Psoas muscle (tissue), 8 donors: ENCODE measurements at regions of chr15 and their contacts with region 1.

Region 1: DNA sequence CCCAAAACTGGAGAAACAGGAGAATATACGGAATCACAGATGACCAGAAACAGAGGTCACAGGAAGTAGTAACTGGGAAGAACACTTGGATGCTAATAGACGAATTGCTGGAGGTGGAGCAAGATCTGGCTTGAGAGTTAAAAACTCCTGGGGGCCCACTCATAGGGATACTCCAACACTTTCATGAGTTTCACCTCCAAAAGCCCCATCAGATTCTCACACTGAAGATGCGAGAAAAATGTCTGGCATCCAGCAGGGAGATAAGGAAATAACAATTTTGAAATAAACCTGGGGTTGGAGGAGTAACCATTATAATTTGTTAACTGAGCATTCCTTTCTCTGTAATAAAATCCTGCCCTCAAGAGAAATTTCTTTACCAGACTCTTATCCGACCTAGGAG is 154.0 kb downstream of the ANXA2 start:
- DNase-seq: no peak
- ATAC-seq: no peak
- H3K4me3 ChIP-seq: no peak overlapping the region
- H3K27ac ChIP-seq: no peak overlapping the region
- H3K4me1 ChIP-seq: no peaks in the 10 kb centered on the region
- H3K27me3 ChIP-seq: no peaks in the 10 kb centered on the region
- CTCF ChIP-seq: no peak

Region 2: GRCh38 chr15:60195611-60196010 is 48.2 kb before region 1 on chr15:
- intact Hi-C with region 1: loop called in 1 of 2 experiments (anchors 2 kb)
- DNase-seq: no peak
- ATAC-seq: no peak
- H3K4me3 ChIP-seq: no peak overlapping the region
- H3K27ac ChIP-seq: no peak overlapping the region
- H3K4me1 ChIP-seq: no peaks in the 10 kb centered on the region
- H3K27me3 ChIP-seq: no peaks in the 10 kb centered on the region
- CTCF ChIP-seq: no peak